Ascending aorta (tissue), 2 donors: ENCODE measurements at regions of chr19 and their contacts with region 1.

Region 1: GRCh38 chr19:40662921-40663694 is 27.3 kb downstream of the NUMBL start:
- DNase-seq: peak; percentile 40 to 95
- H3K4me3 ChIP-seq: peak overlapping the region; percentile 64 to 77
- H3K27ac ChIP-seq: peak overlapping the region; percentile 80 to 84
- H3K4me1 ChIP-seq: peaks cover 3 to 13% of the 10 kb centered on the region in 2 donors
- H3K27me3 ChIP-seq: no peaks in the 10 kb centered on the region
- CTCF ChIP-seq: peak in 2 of 3 experiments; percentile 99 to 100

Region 2: GRCh38 chr19:40690693-40691420 is 27.7 kb after region 1 on chr19:
- intact Hi-C with region 1: loop called (anchors 1 kb)
- DNase-seq: peak; percentile 71 to 97
- H3K4me3 ChIP-seq: peak overlapping the region; percentile 84 to 86
- H3K27ac ChIP-seq: peak overlapping the region; percentile 89 to 93
- H3K4me1 ChIP-seq: peaks cover 6 to 24% of the 10 kb centered on the region in 2 donors
- H3K27me3 ChIP-seq: no peaks in the 10 kb centered on the region
- CTCF ChIP-seq: no peak

Region 3: DNA sequence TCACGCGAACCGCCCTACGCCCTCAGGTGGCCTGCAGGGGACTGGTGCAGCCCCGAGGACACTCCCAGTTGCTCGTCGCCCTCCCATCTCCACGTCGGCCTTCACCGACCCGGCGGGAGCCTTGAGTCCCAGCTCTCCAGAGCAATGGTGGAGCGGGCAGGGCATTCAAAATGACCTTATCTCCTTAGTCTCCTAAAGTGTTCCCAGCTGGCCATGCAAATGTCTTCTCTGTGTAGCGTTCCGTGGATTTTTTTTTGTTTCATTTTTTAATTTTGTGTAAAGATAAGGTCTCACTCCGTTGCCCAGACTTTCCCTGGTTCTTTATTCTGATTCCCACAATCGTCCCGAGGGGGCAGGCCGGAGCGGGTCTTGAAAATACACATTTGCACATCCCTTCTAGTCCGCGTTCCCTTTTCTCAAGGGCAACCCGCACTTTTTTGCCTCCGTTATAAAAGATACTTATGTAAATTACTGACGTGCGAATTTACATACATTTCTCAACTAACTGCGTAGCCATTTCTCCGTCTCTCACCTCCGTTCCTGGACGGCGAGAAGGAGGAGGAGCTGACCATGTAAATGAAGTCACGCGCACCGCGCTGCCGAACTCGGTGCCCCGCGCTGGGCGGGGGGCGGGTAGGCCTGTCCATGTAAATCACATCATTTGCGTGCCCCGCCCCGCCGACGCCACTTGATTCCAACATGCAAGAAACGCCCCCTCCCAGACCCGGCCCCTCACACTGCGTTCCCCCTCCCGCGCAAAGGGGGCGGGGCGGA is 135.3 kb after region 1 on chr19:
- intact Hi-C with region 1: loop called (anchors 5 kb)
- DNase-seq: peak; percentile 100
- H3K4me3 ChIP-seq: peak overlapping the region; percentile 55 to 99
- H3K27ac ChIP-seq: peak overlapping the region; percentile 89 to 95
- H3K4me1 ChIP-seq: peaks cover 28 to 40% of the 10 kb centered on the region in 2 donors
- H3K27me3 ChIP-seq: no peaks in the 10 kb centered on the region
- CTCF ChIP-seq: peak; percentile 28 to 54 (median 48)

Region 4: DNA sequence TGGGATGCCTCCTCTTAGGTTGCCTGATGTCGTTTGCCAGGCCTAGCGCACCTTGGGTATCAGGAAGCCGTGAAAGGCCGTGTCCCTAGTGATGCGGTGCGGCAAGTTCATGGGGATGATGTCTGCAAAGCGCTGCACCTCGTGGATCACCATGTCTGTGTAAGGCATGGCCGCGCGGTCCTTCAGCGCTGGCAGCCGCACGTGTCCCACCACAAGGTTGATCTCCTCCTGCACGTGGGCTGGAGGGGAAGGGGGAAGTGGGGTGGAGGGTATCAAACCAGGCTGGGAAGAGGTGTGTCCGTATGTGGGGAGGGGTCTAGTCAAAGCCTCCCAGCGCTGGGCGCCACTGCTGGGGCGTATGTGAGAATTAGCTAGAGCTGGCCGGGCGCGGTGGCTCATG is 159.1 kb after region 1 on chr19:
- intact Hi-C with region 1: loop called (anchors 1 kb)
- DNase-seq: no peak
- H3K4me3 ChIP-seq: no peak overlapping the region
- H3K27ac ChIP-seq: no peak overlapping the region
- H3K4me1 ChIP-seq: peaks cover 0 to 21% of the 10 kb centered on the region in 2 donors
- H3K27me3 ChIP-seq: no peaks in the 10 kb centered on the region
- CTCF ChIP-seq: no peak

Region 5: GRCh38 chr19:41263850-41264580 is 600.9 kb after region 1 on chr19 and contains the start of gene HNRNPUL1:
- intact Hi-C with region 1: loop called (anchors 10 kb)
- DNase-seq: peak; percentile 97 to 99
- H3K4me3 ChIP-seq: peak within 1 kb of the TSS; percentile 81 to 82
- H3K27ac ChIP-seq: peak within 1 kb of the TSS; percentile 94 to 98
- H3K4me1 ChIP-seq: peaks cover 9 to 22% of the 10 kb centered on the region in 2 donors
- H3K27me3 ChIP-seq: no peaks in the 10 kb centered on the region
- CTCF ChIP-seq: peak; percentile 25 to 44 (median 40)
- total RNA-seq, gene HNRNPUL1: 81.1 TPM